Left ventricle myocardium inferior (tissue), 1 donor: ENCODE measurements at regions of chr17 and their contacts with region 1.

Region 1: GRCh38 chr17:8294814-8295316 is 335 bp downstream of the SLC25A35 start:
- DNase-seq: no peak
- H3K4me3 ChIP-seq: peak overlapping the region; percentile 74
- H3K27ac ChIP-seq: peak overlapping the region; percentile 94
- H3K4me1 ChIP-seq: peaks cover 11% of the 10 kb centered on the region
- H3K27me3 ChIP-seq: no peaks in the 10 kb centered on the region
- CTCF ChIP-seq: peak; percentile 3

Region 2: GRCh38 chr17:8253800-8254199 is 41.1 kb before region 1 on chr17:
- intact Hi-C with region 1: loop called (anchors 5 kb)
- DNase-seq: no peak
- H3K4me3 ChIP-seq: no peak overlapping the region
- H3K27ac ChIP-seq: no peak overlapping the region
- H3K4me1 ChIP-seq: peaks cover 12% of the 10 kb centered on the region
- H3K27me3 ChIP-seq: no peaks in the 10 kb centered on the region
- CTCF ChIP-seq: peak; percentile 38